ENCODE measurements at regions of chr3 and their contacts with region 1.

Region 1: GRCh38 chr3:111585214-111585613 is 9.9 kb downstream of the ZBED2 start:
- DNase-seq: peak; percentile 84
- H3K4me3 ChIP-seq: no peak overlapping the region
- H3K27ac ChIP-seq: peak overlapping the region; percentile 99
- H3K4me1 ChIP-seq: peaks cover 54% of the 10 kb centered on the region
- H3K27me3 ChIP-seq: no peaks in the 10 kb centered on the region
- CTCF ChIP-seq: no peak

Region 2: DNA sequence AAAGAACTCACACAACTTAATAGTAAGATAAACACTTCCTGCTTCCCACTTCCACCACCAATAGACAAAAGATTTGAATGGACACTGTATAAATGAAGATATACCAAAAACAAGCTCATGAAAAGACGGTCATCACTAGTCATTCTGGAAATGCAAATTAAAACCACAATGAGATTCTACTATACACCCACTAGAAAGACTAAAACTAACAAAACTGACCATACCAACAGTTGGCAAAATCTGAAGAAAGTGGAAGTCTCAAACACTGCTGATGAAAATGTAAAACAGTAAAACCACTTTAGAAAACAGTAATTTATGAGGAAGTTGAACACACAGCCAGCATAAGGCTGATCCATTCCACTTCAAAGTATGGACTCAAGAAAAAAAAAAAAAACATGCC is 78.8 kb before region 1 on chr3:
- CTCF ChIA-PET with region 1: no interaction called
- dilution Hi-C with region 1: no loop called
- in situ Hi-C with region 1: no loop called
- intact Hi-C with region 1: no loop called
- DNase-seq: no peak
- H3K4me3 ChIP-seq: no peak overlapping the region
- H3K27ac ChIP-seq: no peak overlapping the region
- H3K4me1 ChIP-seq: no peaks in the 10 kb centered on the region
- H3K27me3 ChIP-seq: no peaks in the 10 kb centered on the region
- CTCF ChIP-seq: no peak

Region 3: DNA sequence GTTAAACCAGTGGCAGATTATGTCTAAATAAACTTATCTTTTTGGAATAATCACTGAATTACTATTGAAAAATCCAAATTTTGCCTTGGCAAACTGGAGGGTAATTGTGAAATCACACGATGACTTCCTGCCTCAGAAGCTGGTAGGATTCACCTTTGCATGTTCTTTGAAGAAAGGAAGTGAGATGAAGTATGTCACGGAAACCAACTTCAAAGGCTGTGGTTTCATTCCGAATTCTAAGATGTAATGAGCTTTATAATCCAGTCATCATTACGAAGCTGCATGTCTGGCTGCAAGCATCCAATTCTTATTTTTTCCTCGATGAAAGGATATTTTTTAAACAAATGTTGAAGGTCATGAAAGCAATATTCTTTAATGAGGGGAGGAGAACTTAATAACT is 25.0 kb after region 1 on chr3:
- CTCF ChIA-PET with region 1: no interaction called
- dilution Hi-C with region 1: no loop called
- in situ Hi-C with region 1: no loop called
- intact Hi-C with region 1: loop called (anchors 1 kb)
- DNase-seq: peak; percentile 81
- H3K4me3 ChIP-seq: peak overlapping the region; percentile 6 to 21 (median 10)
- H3K27ac ChIP-seq: peak overlapping the region; percentile 95
- H3K4me1 ChIP-seq: peaks cover 24% of the 10 kb centered on the region
- H3K27me3 ChIP-seq: no peaks in the 10 kb centered on the region
- CTCF ChIP-seq: no peak

Measured in mammary epithelial cell (primary cell).